Activated CD4-positive, alpha-beta T cell treated with anti-CD3 and anti-CD28 coated beads for 36 hours (primary cell): ENCODE measurements at regions of chr20 and their contacts with region 1.

Region 1: GRCh38 chr20:2752567-2753460 is 47.6 kb downstream of the CPXM1 start:
- DNase-seq: peak; percentile 67
- ATAC-seq: peak; percentile 28
- H3K4me3 Mint-ChIP-seq: peak overlapping the region; percentile 69
- H3K27ac Mint-ChIP-seq: peak overlapping the region; percentile 34
- H3K4me1 Mint-ChIP-seq: peaks cover 32% of the 10 kb centered on the region
- H3K27me3 Mint-ChIP-seq: peaks cover 34% of the 10 kb centered on the region

Region 2: DNA sequence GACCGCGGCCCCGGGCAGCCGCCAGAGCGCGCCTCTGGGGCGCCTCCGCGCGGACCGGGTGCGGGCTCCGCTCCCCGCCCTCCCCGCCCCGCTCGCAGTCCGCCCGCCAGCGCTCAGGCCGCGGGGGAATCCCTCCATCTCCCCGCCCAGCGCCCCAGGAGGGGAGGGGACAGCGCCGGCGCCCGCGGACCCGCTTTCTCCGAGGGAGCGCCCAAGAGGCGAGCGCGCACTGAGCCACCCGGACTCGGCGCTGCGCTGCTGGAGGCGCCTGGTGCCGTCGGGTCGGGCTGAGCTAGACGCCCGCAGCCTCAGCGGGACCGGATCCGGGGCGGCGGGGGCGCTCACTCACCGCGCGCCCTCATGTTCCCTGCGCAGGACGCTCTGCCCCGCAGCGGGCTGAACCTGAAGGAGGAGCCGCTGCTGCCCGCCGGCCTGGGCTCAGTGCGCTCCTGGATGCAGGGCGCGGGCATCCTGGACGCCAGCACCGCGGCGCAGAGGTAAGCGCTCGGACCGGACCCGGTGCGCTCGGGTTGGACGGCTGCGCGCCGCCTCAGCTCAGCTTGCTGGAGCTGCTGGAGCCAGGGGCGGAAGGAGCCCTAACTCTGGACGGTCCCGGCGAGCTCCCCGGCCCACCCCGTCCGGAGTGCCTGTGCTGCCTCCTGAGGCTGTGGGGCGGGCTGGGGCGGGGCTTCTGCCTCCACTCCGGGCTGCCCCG is 59.4 kb before region 1 on chr20:
- CTCF ChIA-PET with region 1: interaction called, 45 read pairs
- POLR2A ChIA-PET with region 1: no interaction called
- intact Hi-C with region 1: loop called (anchors 1 to 2 kb)
- DNase-seq: peak; percentile 71
- ATAC-seq: peak; percentile 67
- H3K4me3 Mint-ChIP-seq: no peak overlapping the region
- H3K27ac Mint-ChIP-seq: no peak overlapping the region
- H3K4me1 Mint-ChIP-seq: peaks cover 11% of the 10 kb centered on the region
- H3K27me3 Mint-ChIP-seq: peaks cover 43% of the 10 kb centered on the region

Region 3: DNA sequence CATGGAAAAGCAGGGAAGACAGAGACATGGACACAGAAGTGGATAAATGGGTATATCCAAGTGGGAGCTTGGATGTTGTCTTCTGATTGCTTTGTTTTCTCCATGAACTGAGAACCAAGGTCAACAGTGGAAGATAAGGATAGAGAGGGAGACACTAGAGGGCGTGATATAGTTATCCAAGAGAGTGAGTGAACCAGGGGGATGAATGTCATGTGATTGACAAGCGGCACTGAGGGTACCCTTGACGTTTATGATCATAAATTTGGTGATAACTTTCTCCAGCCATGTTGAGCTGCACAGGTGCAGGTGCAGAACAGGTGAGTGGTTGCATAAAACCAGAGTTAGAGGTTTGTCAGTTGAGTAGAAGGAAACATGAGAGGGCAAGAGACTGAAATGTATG is 39.5 kb before region 1 on chr20:
- CTCF ChIA-PET with region 1: interaction called, 9 read pairs
- POLR2A ChIA-PET with region 1: no interaction called
- intact Hi-C with region 1: loop called in 1 of 2 experiments (anchors 1 kb)
- DNase-seq: no peak
- ATAC-seq: peak; percentile 81
- H3K4me3 Mint-ChIP-seq: no peak overlapping the region
- H3K27ac Mint-ChIP-seq: no peak overlapping the region
- H3K4me1 Mint-ChIP-seq: no peaks in the 10 kb centered on the region
- H3K27me3 Mint-ChIP-seq: no peaks in the 10 kb centered on the region

Region 4: GRCh38 chr20:2799688-2800520 is 47.1 kb after region 1 on chr20:
- CTCF ChIA-PET with region 1: interaction called, 5 read pairs
- POLR2A ChIA-PET with region 1: no interaction called
- intact Hi-C with region 1: loop called in 1 of 2 experiments (anchors 1 kb)
- DNase-seq: peak; percentile 38
- ATAC-seq: peak; percentile 60
- H3K4me3 Mint-ChIP-seq: peak overlapping the region; percentile 86
- H3K27ac Mint-ChIP-seq: peak overlapping the region; percentile 89
- H3K4me1 Mint-ChIP-seq: peaks cover 22% of the 10 kb centered on the region
- H3K27me3 Mint-ChIP-seq: peaks cover 52% of the 10 kb centered on the region

Region 5: GRCh38 chr20:2849529-2849928 is 96.7 kb after region 1 on chr20:
- CTCF ChIA-PET with region 1: no interaction called
- POLR2A ChIA-PET with region 1: no interaction called
- intact Hi-C with region 1: loop called (anchors 2 to 5 kb)
- DNase-seq: peak; percentile 29
- ATAC-seq: peak; percentile 89
- H3K4me3 Mint-ChIP-seq: no peak overlapping the region
- H3K27ac Mint-ChIP-seq: no peak overlapping the region
- H3K4me1 Mint-ChIP-seq: peaks cover 26% of the 10 kb centered on the region
- H3K27me3 Mint-ChIP-seq: no peaks in the 10 kb centered on the region

Region 6: GRCh38 chr20:3000852-3001523 is 248.2 kb after region 1 on chr20:
- CTCF ChIA-PET with region 1: interaction called, 6 read pairs
- POLR2A ChIA-PET with region 1: no interaction called
- intact Hi-C with region 1: loop called (anchors 2 to 5 kb)
- DNase-seq: peak; percentile 23
- ATAC-seq: peak; percentile 98
- H3K4me3 Mint-ChIP-seq: no peak overlapping the region
- H3K27ac Mint-ChIP-seq: peak overlapping the region; percentile 59
- H3K4me1 Mint-ChIP-seq: peaks cover 11% of the 10 kb centered on the region
- H3K27me3 Mint-ChIP-seq: no peaks in the 10 kb centered on the region